Heart left ventricle (tissue), 16 donors: ENCODE measurements at regions of chr2 and their contacts with region 1.

Region 1: DNA sequence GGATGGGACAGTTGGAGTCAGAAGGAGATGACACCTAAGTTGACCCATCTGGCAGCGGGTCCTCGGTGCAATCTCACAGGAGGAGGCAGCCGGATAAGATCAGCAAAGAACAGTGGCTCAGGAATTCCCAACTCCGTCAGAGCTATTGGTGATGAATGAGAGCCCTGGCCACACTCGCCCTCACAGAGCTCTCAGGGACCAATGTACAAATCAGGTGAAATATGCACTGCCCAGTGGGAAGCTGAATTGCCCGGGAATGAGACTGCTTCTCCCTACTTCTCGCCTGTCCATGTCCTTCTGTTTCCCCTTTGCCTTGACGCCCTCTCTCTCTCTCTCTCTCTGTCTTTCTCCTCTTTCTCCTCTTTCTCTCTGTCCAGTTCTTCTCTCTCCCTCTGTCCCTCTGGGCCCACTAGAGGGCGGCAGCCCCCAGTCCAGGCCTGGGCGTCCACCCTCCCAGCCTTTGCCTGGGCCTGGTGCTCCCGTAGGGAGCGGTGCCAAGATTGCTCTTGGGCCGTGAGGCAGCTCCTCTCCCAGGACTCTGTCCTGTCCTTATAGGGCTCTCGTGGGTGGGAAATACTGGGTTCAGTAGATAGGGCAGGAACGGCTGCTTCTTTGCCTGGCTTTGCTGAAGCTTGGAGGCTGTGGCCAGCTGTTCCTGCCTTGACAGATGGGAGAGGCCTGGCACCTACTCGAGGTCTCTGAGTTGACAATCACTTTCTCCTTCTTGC is 28.3 kb upstream of the PUM2 start:
- DNase-seq: peak; percentile 87 to 93 (median 91)
- ATAC-seq: peak; percentile 94 to 98 (median 97)
- H3K4me3 ChIP-seq: no peak overlapping the region
- H3K27ac ChIP-seq: peak overlapping the region in 10 of 12 donors; percentile 21 to 78 (median 48)
- H3K4me1 ChIP-seq: peaks cover 0 to 25% (median 13%) of the 10 kb centered on the region in 12 donors
- H3K27me3 ChIP-seq: no peaks in the 10 kb centered on the region
- CTCF ChIP-seq: peak; percentile 62 to 92 (median 82)
- POLR2A ChIP-seq: no peak

Region 2: DNA sequence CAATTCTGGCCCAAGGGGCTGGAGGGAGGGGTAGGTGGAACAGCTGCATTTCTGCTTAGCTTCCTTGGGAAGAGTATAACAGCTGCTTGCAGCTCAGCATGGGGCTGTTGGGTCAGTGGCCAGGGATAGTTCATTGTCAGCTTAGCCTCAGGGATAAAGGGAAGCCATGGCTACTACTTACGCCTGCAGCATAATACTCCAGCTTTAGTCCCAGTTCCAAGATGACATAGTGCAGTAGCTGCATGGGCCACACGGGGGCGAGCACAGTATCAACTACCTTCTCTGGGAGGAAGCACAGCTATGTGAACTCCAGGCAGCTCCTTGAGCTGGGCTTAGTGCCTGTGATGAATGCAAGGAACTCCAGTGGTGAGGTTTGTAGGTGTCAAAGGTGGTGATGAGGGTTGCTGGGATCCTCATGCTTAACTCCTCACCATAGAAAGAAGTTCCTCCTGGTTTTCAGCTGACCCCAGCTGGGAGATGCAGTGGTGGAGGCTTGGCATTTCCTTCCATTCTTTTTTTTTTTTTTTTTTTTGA is 32.5 kb after region 1 on chr2:
- intact Hi-C with region 1: loop called in 1 of 10 experiments (anchors 2 kb)
- DNase-seq: peak; percentile 83 to 92 (median 86)
- ATAC-seq: peak; percentile 82 to 98 (median 97)
- H3K4me3 ChIP-seq: no peak overlapping the region
- H3K27ac ChIP-seq: no peak overlapping the region
- H3K4me1 ChIP-seq: peaks cover 0 to 5% (median 0%) of the 10 kb centered on the region in 12 donors
- H3K27me3 ChIP-seq: no peaks in the 10 kb centered on the region
- CTCF ChIP-seq: peak; percentile 73 to 87 (median 83)
- POLR2A ChIP-seq: no peak

Region 3: GRCh38 chr2:20424300-20425290 is 45.6 kb after region 1 on chr2:
- intact Hi-C with region 1: loop called in 1 of 10 experiments (anchors 5 kb)
- DNase-seq: peak; percentile 48 to 82 (median 64)
- ATAC-seq: peak in 3 of 4 donors; percentile 13 to 48 (median 38)
- H3K4me3 ChIP-seq: peak overlapping the region in 1 of 12 donors; percentile 32
- H3K27ac ChIP-seq: peak overlapping the region in 11 of 12 donors; percentile 5 to 92 (median 50)
- H3K4me1 ChIP-seq: peaks cover 11 to 66% (median 37%) of the 10 kb centered on the region in 12 donors
- H3K27me3 ChIP-seq: no peaks in the 10 kb centered on the region
- CTCF ChIP-seq: no peak
- POLR2A ChIP-seq: no peak

Region 4: DNA sequence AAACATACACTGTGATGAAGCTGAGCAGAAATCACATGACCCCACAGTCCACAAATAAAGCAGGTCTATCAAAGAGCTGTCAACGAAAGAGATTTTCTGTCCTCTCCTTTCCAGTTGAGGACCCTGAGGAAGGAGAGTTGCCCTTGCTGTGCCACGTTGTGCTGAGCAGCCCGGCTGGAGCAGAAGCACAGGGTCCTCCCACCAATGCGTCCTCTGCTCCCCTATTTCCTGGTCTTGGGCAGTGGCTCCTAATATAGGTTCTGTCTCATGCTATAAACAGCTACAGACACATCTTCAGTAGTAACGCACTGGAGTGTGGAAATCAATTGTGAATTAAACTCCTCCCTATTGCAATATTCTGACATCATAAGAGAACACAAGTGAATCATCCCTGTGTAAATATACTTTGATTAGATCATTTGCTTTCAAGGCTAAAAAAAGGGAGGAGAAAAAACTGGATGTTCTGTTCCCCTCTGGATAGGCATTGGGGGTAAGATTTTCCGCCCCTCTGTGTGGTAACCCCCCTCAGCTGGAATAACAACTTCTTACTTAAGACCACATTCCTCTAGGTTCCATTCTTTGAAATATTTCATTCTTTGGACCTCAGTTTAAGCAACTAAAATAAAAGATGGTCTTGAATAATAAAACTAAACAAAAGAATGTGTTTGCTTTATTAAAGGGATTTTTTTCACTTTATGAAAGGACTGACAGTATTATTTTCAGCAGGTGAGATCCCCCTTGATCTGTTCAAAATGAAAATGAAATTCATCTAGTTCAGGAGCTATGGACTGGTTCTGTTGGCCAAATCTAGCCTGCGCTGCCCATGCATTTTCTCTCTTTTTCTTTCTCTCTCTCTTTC is 59.6 kb after region 1 on chr2:
- intact Hi-C with region 1: loop called in 1 of 10 experiments (anchors 10 kb)
- DNase-seq: peak in 1 of 5 donors; percentile 50
- ATAC-seq: peak; percentile 49 to 86 (median 81)
- H3K4me3 ChIP-seq: peak overlapping the region in 1 of 12 donors; percentile 3
- H3K27ac ChIP-seq: peak overlapping the region in 10 of 12 donors; percentile 27 to 92 (median 54)
- H3K4me1 ChIP-seq: peaks cover 0 to 33% (median 8%) of the 10 kb centered on the region in 12 donors
- H3K27me3 ChIP-seq: no peaks in the 10 kb centered on the region
- CTCF ChIP-seq: no peak
- POLR2A ChIP-seq: peak in 1 of 2 donors; percentile 60

Region 5: GRCh38 chr2:20642055-20642971 is 263.4 kb after region 1 on chr2:
- intact Hi-C with region 1: loop called in 1 of 10 experiments (anchors 5 kb)
- DNase-seq: peak; percentile 76 to 89 (median 79)
- ATAC-seq: peak; percentile 82 to 91 (median 88)
- H3K4me3 ChIP-seq: no peak overlapping the region
- H3K27ac ChIP-seq: peak overlapping the region in 6 of 12 donors; percentile 1 to 90 (median 52)
- H3K4me1 ChIP-seq: peaks cover 5 to 45% (median 23%) of the 10 kb centered on the region in 12 donors
- H3K27me3 ChIP-seq: no peaks in the 10 kb centered on the region
- CTCF ChIP-seq: peak; percentile 88 to 98 (median 96)
- POLR2A ChIP-seq: peak in 1 of 2 donors; percentile 15